CD8-positive, alpha-beta T cell (primary cell): ENCODE measurements at regions of chr5 and their contacts with region 1.

Region 1: GRCh38 chr5:56838409-56839039 is 23.2 kb downstream of the MAP3K1 start:
- DNase-seq: peak in 2 of 9 experiments; percentile 68 to 76
- ATAC-seq: peak; percentile 74
- H3K4me3 ChIP-seq: no peak overlapping the region
- H3K4me3 Mint-ChIP-seq: peak overlapping the region; percentile 42
- H3K27ac ChIP-seq: no peak overlapping the region
- H3K27ac Mint-ChIP-seq: peak overlapping the region; percentile 75
- H3K4me1 ChIP-seq: peaks cover 20% of the 10 kb centered on the region
- H3K4me1 Mint-ChIP-seq: peaks cover 79% of the 10 kb centered on the region
- H3K27me3 ChIP-seq: no peaks in the 10 kb centered on the region
- H3K27me3 Mint-ChIP-seq: no peaks in the 10 kb centered on the region
- CTCF ChIP-seq: peak; percentile 60

Region 2: DNA sequence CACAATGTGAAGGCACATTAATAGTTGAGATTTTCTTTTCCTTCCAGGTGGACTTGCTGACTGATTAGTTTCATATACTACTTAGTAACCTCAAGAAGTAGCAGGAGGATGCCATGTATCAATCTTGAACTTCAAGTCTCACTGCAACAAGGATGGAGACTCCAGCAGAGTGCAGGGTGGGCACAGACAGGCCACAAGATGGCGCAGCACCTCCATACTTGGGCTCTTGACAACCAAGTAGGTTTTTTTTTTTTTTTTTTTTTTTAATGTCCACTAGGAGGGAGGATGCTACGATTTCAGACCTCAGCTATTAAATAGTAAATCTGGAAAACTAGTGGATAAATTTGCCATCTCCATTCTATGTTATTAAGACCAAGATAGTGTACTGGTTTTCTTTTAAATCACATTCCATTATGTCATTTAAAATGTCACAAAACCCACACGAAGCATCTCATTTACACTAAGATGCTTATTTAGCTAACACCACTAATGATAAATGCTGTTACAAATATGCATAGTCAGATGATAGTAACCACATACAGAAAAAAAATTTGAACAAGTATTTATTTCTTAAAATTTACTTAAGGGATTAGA is 902.3 kb before region 1 on chr5:
- CTCF ChIA-PET with region 1: interaction called, 12 read pairs
- POLR2A ChIA-PET with region 1: no interaction called
- intact Hi-C with region 1: loop called (anchors 1 to 2 kb)
- DNase-seq: peak; percentile 53 to 87 (median 80)
- ATAC-seq: peak; percentile 92
- H3K4me3 ChIP-seq: no peak overlapping the region
- H3K4me3 Mint-ChIP-seq: no peak overlapping the region
- H3K27ac ChIP-seq: no peak overlapping the region
- H3K27ac Mint-ChIP-seq: peak overlapping the region; percentile 55
- H3K4me1 ChIP-seq: no peaks in the 10 kb centered on the region
- H3K4me1 Mint-ChIP-seq: peaks cover 10% of the 10 kb centered on the region
- H3K27me3 ChIP-seq: no peaks in the 10 kb centered on the region
- H3K27me3 Mint-ChIP-seq: no peaks in the 10 kb centered on the region
- CTCF ChIP-seq: peak; percentile 86

Region 3: GRCh38 chr5:56264417-56265025 is 574.0 kb before region 1 on chr5:
- CTCF ChIA-PET with region 1: interaction called, 89 read pairs
- POLR2A ChIA-PET with region 1: no interaction called
- intact Hi-C with region 1: no loop called
- DNase-seq: peak in 3 of 9 experiments; percentile 14 to 44 (median 28)
- ATAC-seq: no peak
- H3K4me3 ChIP-seq: no peak overlapping the region
- H3K4me3 Mint-ChIP-seq: no peak overlapping the region
- H3K27ac ChIP-seq: no peak overlapping the region
- H3K27ac Mint-ChIP-seq: no peak overlapping the region
- H3K4me1 ChIP-seq: no peaks in the 10 kb centered on the region
- H3K4me1 Mint-ChIP-seq: no peaks in the 10 kb centered on the region
- H3K27me3 ChIP-seq: no peaks in the 10 kb centered on the region
- H3K27me3 Mint-ChIP-seq: peaks cover 3% of the 10 kb centered on the region
- CTCF ChIP-seq: no peak

Region 4: GRCh38 chr5:56282216-56282615 is 556.3 kb before region 1 on chr5:
- CTCF ChIA-PET with region 1: interaction called, 15 read pairs
- POLR2A ChIA-PET with region 1: no interaction called
- intact Hi-C with region 1: no loop called
- DNase-seq: no peak
- ATAC-seq: no peak
- H3K4me3 ChIP-seq: no peak overlapping the region
- H3K4me3 Mint-ChIP-seq: no peak overlapping the region
- H3K27ac ChIP-seq: no peak overlapping the region
- H3K27ac Mint-ChIP-seq: no peak overlapping the region
- H3K4me1 ChIP-seq: no peaks in the 10 kb centered on the region
- H3K4me1 Mint-ChIP-seq: no peaks in the 10 kb centered on the region
- H3K27me3 ChIP-seq: no peaks in the 10 kb centered on the region
- H3K27me3 Mint-ChIP-seq: no peaks in the 10 kb centered on the region
- CTCF ChIP-seq: no peak

Region 5: GRCh38 chr5:56481428-56482357 is 356.8 kb before region 1 on chr5:
- CTCF ChIA-PET with region 1: interaction called, 5 read pairs
- POLR2A ChIA-PET with region 1: no interaction called
- intact Hi-C with region 1: loop called (anchors 5 kb)
- DNase-seq: peak in 5 of 9 experiments; percentile 12 to 63 (median 30)
- ATAC-seq: peak; percentile 19
- H3K4me3 ChIP-seq: peak overlapping the region; percentile 48 to 54
- H3K4me3 Mint-ChIP-seq: peak overlapping the region; percentile 85
- H3K27ac ChIP-seq: peak overlapping the region in 1 of 2 experiments; percentile 62
- H3K27ac Mint-ChIP-seq: peak overlapping the region; percentile 83
- H3K4me1 ChIP-seq: peaks cover 14% of the 10 kb centered on the region
- H3K4me1 Mint-ChIP-seq: peaks cover 33% of the 10 kb centered on the region
- H3K27me3 ChIP-seq: no peaks in the 10 kb centered on the region
- H3K27me3 Mint-ChIP-seq: peaks cover 11% of the 10 kb centered on the region
- CTCF ChIP-seq: peak; percentile 13

Region 6: GRCh38 chr5:56918054-56918453 is 79.5 kb after region 1 on chr5:
- CTCF ChIA-PET with region 1: no interaction called
- POLR2A ChIA-PET with region 1: no interaction called
- intact Hi-C with region 1: no loop called
- DNase-seq: no peak
- ATAC-seq: no peak
- H3K4me3 ChIP-seq: no peak overlapping the region
- H3K4me3 Mint-ChIP-seq: no peak overlapping the region
- H3K27ac ChIP-seq: no peak overlapping the region
- H3K27ac Mint-ChIP-seq: no peak overlapping the region
- H3K4me1 ChIP-seq: no peaks in the 10 kb centered on the region
- H3K4me1 Mint-ChIP-seq: peaks cover 3% of the 10 kb centered on the region
- H3K27me3 ChIP-seq: no peaks in the 10 kb centered on the region
- H3K27me3 Mint-ChIP-seq: no peaks in the 10 kb centered on the region
- CTCF ChIP-seq: no peak

Region 7: DNA sequence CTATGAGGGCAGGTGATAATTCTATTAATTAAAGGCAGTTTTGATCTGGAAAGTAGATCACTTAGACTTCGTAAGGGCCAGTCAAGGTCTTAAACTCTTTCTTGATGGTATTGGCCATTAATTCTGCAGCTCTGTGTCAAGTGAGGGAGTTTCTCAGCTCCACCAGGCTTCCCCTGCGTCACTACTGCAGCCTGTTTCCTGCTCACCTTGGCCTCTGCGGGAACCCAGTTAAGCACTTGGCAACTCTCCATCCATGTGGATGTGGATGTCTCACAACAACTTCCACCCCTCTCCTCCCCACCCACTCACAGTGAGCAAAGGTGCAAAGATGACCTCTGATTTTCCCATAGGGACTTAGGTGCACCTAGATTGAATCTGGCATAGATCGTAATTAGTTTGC is 1429.7 kb after region 1 on chr5:
- CTCF ChIA-PET with region 1: no interaction called
- POLR2A ChIA-PET with region 1: no interaction called
- intact Hi-C with region 1: no loop called
- DNase-seq: no peak
- ATAC-seq: no peak
- H3K4me3 ChIP-seq: no peak overlapping the region
- H3K4me3 Mint-ChIP-seq: no peak overlapping the region
- H3K27ac ChIP-seq: no peak overlapping the region
- H3K27ac Mint-ChIP-seq: no peak overlapping the region
- H3K4me1 ChIP-seq: no peaks in the 10 kb centered on the region
- H3K4me1 Mint-ChIP-seq: no peaks in the 10 kb centered on the region
- H3K27me3 ChIP-seq: no peaks in the 10 kb centered on the region
- H3K27me3 Mint-ChIP-seq: peaks cover 2% of the 10 kb centered on the region
- CTCF ChIP-seq: no peak